Psoas muscle (tissue), 8 donors: ENCODE measurements at regions of chr10 and their contacts with region 1.

Region 1: DNA sequence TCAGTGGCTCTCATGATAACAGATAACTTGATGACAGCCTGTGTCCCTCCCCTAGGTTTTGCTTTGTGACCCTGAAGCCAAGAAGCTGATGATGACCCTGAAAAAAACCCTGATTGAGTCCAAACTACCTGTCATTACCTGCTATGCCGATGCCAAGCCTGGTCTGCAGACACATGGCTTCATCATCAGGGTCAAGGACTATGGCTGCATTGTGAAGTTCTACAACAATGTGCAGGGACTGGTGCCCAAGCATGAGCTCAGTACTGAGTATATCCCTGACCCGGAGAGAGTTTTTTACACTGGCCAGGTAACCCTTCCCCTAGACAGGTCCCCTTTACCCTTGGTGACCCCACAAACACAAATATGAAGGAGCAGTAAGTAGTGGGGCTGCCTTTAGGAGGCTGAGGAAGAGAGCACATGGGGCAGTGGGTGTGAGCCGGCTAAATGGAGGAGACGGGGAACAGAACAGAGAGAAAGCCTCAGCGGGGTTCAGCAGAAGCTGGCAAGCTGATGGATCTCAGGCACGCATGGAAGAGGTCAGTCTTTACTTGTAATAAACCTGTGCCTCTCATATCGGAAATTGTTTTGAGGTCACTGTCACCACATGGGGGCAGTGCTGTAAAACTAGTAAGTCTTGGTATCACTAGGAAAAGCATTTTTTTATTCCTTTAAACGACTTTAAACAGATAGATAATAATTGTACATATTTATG is 20.2 kb downstream of the PDCD11 start:
- DNase-seq: peak in 1 of 2 donors; percentile 46
- ATAC-seq: peak in 3 of 4 donors; percentile 46 to 69 (median 53)
- H3K4me3 ChIP-seq: no peak overlapping the region
- H3K27ac ChIP-seq: no peak overlapping the region
- H3K4me1 ChIP-seq: no peaks in the 10 kb centered on the region
- H3K27me3 ChIP-seq: no peaks in the 10 kb centered on the region
- CTCF ChIP-seq: peak; percentile 75

Region 2: DNA sequence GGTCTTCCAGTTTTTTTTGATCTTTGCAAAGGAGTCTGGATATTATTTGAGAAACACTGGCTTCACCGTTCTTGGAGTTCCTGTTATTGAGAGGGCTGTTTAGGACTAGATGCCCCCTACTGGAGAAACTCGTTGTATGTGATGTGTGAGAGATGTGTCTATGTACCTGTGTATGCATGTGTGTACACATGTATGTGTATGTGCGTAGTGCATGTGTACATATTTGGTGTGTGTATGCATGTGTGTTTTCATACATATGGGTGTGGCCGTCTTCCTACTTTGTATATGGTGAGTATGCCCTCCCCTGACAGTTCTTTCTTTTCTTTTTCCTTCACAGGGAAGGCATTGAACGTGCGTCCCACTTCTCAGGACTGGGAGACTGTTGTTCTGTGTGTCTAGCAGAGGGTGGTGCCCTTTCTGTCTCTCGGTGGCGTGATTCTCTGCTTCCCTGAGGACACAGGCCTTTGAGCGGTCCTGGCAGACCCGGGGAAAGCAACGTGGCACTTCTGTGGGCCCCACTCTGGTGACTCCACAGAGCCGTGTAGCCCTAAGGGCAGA is 65.5 kb after region 1 on chr10:
- intact Hi-C with region 1: loop called (anchors 2 to 5 kb)
- DNase-seq: peak in 1 of 2 donors; percentile 39
- ATAC-seq: peak in 3 of 4 donors; percentile 41 to 69 (median 55)
- H3K4me3 ChIP-seq: no peak overlapping the region
- H3K27ac ChIP-seq: no peak overlapping the region
- H3K4me1 ChIP-seq: no peaks in the 10 kb centered on the region
- H3K27me3 ChIP-seq: no peaks in the 10 kb centered on the region
- CTCF ChIP-seq: peak; percentile 59

Region 3: GRCh38 chr10:103592186-103593021 is 175.8 kb after region 1 on chr10:
- intact Hi-C with region 1: loop called (anchors 1 to 5 kb)
- DNase-seq: peak; percentile 51 to 69
- ATAC-seq: peak; percentile 69 to 85 (median 80)
- H3K4me3 ChIP-seq: no peak overlapping the region
- H3K27ac ChIP-seq: no peak overlapping the region
- H3K4me1 ChIP-seq: no peaks in the 10 kb centered on the region
- H3K27me3 ChIP-seq: no peaks in the 10 kb centered on the region
- CTCF ChIP-seq: peak; percentile 62

Region 4: DNA sequence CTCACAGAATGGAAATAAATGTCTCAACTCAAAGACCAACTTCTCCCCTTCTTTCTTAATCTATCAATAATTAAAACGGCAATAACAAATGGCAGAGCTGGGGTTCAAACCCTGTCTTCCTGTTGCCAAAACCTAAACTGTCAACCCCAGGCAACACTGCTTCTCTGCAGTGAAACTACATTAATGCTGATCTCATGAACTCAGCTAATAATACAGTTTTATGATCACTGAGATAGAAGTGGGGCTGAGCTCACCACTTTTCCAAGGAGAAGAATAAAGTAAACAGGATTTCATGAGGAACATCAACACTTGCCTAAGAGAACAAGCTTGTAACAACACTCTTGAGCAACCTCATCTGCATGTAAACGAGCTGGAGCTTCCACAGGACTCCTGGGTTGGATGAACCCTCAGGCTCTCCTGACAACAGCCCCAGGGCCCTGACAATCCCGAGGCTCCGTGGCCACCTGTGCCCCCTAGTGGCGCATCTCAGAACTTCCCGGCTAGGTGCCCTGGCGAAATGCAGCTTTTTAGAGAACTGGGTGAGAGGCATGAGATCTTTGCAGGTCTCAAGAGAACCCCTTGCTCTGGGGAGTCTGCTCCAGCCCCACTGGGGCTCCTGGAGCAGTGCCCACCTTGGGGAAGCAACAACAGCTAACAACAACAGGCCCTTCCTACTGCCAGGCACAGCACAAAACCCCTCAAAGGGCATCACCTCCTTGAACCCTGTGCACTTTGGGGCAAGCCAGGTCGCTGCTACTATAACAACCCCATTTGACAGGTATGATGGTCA is 269.5 kb after region 1 on chr10:
- intact Hi-C with region 1: loop called (anchors 10 kb)
- DNase-seq: peak; percentile 77 to 91
- ATAC-seq: peak; percentile 90 to 94 (median 92)
- H3K4me3 ChIP-seq: no peak overlapping the region
- H3K27ac ChIP-seq: no peak overlapping the region
- H3K4me1 ChIP-seq: peaks cover 9% of the 10 kb centered on the region
- H3K27me3 ChIP-seq: no peaks in the 10 kb centered on the region
- CTCF ChIP-seq: peak; percentile 97